GM10248 (cell line): ENCODE measurements at regions of chr7 and their contacts with region 1.

Region 1: GRCh38 chr7:127733986-127734385 is 82.0 kb downstream of the SND1 start:
- DNase-seq: no peak
- CTCF ChIP-seq: no peak

Region 2: GRCh38 chr7:127717502-127718339 is 16.3 kb before region 1 on chr7:
- CTCF ChIA-PET with region 1: interaction called, 13 read pairs
- POLR2A ChIA-PET with region 1: no interaction called
- DNase-seq: no peak
- CTCF ChIP-seq: no peak